GM23248 (cell line): ENCODE measurements at regions of chr15 and their contacts with region 1.

Region 1: GRCh38 chr15:58070801-58071418 is 5.4 kb upstream of the ALDH1A2 start:
- DNase-seq: peak; percentile 58
- H3K4me3 ChIP-seq: no peak overlapping the region
- H3K27ac ChIP-seq: no peak overlapping the region
- H3K4me1 ChIP-seq: no peaks in the 10 kb centered on the region
- H3K27me3 ChIP-seq: peaks cover 14% of the 10 kb centered on the region

Region 2: DNA sequence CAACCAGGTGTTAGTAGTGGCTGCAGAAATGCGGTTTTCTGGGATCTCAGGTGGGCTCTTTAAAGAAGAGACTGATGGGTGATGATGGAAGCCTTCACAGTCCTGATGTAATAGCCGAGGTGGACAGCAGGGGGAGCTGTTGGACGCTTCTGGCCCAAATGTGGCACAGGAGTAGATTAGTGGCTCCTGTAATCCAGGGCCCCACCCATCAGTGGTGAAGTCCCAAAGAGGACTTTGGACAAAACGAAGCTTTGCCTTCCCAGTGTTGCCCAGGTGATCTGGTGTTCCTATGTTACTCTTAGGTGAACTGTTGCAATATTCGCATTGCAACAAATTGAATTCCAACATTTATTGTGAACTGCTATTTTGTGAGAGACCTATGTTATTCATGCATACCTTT is 511.0 kb before region 1 on chr15:
- in situ Hi-C with region 1: loop called (anchors 10 kb)
- DNase-seq: peak; percentile 59
- H3K4me3 ChIP-seq: no peak overlapping the region
- H3K27ac ChIP-seq: no peak overlapping the region
- H3K4me1 ChIP-seq: no peaks in the 10 kb centered on the region
- H3K27me3 ChIP-seq: 0 out of 2 replicates have a peak, but pooled peaks cover 3% of the 10 kb centered on the region

Region 3: DNA sequence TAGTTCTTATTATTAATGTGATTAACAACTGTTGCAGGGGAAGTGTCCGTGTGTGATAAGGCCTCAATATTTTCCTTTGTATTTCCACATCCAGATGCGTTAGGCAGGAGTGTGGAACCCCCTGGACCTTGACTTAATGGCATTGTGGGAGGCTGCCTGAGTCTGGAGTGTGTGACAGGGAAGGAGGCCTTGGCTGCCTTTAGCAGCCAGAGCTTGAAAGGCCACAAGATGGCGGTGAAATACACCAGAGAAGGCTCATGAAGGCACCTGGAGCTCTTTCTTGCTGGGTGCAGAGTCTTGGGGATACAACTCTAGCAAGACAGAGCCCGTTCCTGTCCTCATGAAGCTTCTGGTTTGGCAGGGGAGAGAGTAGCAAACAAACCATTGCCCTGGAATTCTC is 327.5 kb before region 1 on chr15:
- in situ Hi-C with region 1: loop called (anchors 10 kb)
- DNase-seq: no peak
- H3K4me3 ChIP-seq: no peak overlapping the region
- H3K27ac ChIP-seq: no peak overlapping the region
- H3K4me1 ChIP-seq: no peaks in the 10 kb centered on the region
- H3K27me3 ChIP-seq: no peaks in the 10 kb centered on the region

Region 4: GRCh38 chr15:57866149-57866736 is 204.7 kb before region 1 on chr15:
- in situ Hi-C with region 1: loop called (anchors 10 kb)
- DNase-seq: peak; percentile 72
- H3K4me3 ChIP-seq: no peak overlapping the region
- H3K27ac ChIP-seq: no peak overlapping the region
- H3K4me1 ChIP-seq: peaks cover 8% of the 10 kb centered on the region
- H3K27me3 ChIP-seq: no peaks in the 10 kb centered on the region